ENCODE measurements at regions of chr17 and their contacts with region 1.

Region 1: GRCh38 chr17:29180034-29180787 is at the start of gene MYO18A:
- DNase-seq: peak; percentile 84
- H3K4me3 Mint-ChIP-seq: peak within 1 kb of the TSS; percentile 54
- H3K27ac Mint-ChIP-seq: no peak within 1 kb of the TSS
- H3K4me1 Mint-ChIP-seq: peaks cover 40% of the 10 kb centered on the region
- H3K27me3 Mint-ChIP-seq: peaks cover 7% of the 10 kb centered on the region
- total RNA-seq, gene MYO18A: 92.6 to 100 TPM

Region 2: GRCh38 chr17:28946239-28946638 is 234.0 kb before region 1 on chr17:
- CTCF ChIA-PET with region 1: no interaction called
- POLR2A ChIA-PET with region 1: no interaction called
- DNase-seq: no peak
- H3K4me3 Mint-ChIP-seq: no peak overlapping the region
- H3K27ac Mint-ChIP-seq: peak overlapping the region; percentile 50
- H3K4me1 Mint-ChIP-seq: peaks cover 59% of the 10 kb centered on the region
- H3K27me3 Mint-ChIP-seq: no peaks in the 10 kb centered on the region

Region 3: GRCh38 chr17:28967221-28968140 is 212.7 kb before region 1 on chr17:
- CTCF ChIA-PET with region 1: interaction called, 10 read pairs
- POLR2A ChIA-PET with region 1: no interaction called
- DNase-seq: no peak
- H3K4me3 Mint-ChIP-seq: no peak overlapping the region
- H3K27ac Mint-ChIP-seq: no peak overlapping the region
- H3K4me1 Mint-ChIP-seq: no peaks in the 10 kb centered on the region
- H3K27me3 Mint-ChIP-seq: peaks cover 22% of the 10 kb centered on the region

Region 4: GRCh38 chr17:29078183-29079045 is 101.8 kb before region 1 on chr17:
- CTCF ChIA-PET with region 1: no interaction called
- POLR2A ChIA-PET with region 1: no interaction called
- DNase-seq: no peak
- H3K4me3 Mint-ChIP-seq: no peak overlapping the region
- H3K27ac Mint-ChIP-seq: no peak overlapping the region
- H3K4me1 Mint-ChIP-seq: no peaks in the 10 kb centered on the region
- H3K27me3 Mint-ChIP-seq: no peaks in the 10 kb centered on the region

Region 5: GRCh38 chr17:29140051-29140621 is 40.1 kb before region 1 on chr17:
- CTCF ChIA-PET with region 1: interaction called, 261 read pairs
- POLR2A ChIA-PET with region 1: interaction called, 38 read pairs
- DNase-seq: peak; percentile 92
- H3K4me3 Mint-ChIP-seq: peak overlapping the region; percentile 98
- H3K27ac Mint-ChIP-seq: peak overlapping the region; percentile 100
- H3K4me1 Mint-ChIP-seq: peaks cover 79% of the 10 kb centered on the region
- H3K27me3 Mint-ChIP-seq: no peaks in the 10 kb centered on the region

Region 6: DNA sequence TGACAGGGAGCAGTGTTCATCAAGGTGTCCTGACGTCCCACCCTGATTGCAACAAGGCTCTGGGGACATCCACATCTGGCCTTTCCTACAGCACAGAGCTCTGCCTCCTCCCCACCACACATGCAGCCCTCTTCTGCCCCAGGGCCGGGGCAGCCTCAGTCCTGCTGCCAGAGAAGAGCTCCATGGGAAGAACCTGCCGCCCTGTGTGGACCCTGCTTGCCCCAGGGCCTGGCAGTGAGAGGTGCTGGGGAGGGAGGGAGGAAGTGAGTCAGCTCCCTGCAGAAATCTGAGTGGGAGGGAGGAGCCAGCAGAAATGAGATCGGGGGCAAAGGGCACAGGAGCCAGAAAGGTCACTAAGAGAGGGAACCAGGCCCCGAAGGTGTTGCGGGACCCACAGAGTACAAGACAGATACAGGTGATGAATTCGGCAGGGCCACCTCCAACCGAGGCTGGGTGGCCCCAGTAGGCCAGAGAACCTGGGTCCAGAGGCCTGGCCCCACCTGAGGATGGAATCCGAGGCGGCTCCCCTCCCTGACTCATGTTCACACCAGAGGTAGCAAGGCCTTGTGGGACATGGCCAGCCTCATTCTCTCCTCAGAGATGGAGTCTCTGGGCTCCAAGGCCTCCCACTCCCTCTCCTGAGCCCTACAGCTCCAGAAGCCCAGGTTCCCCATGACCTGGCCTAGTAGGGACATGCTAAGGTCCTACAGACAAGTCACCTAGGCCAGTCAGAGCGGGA is 24.8 kb before region 1 on chr17:
- CTCF ChIA-PET with region 1: interaction called, 261 read pairs
- POLR2A ChIA-PET with region 1: interaction called, 31 read pairs
- DNase-seq: peak; percentile 77
- H3K4me3 Mint-ChIP-seq: peak overlapping the region; percentile 41
- H3K27ac Mint-ChIP-seq: peak overlapping the region; percentile 90
- H3K4me1 Mint-ChIP-seq: peaks cover 50% of the 10 kb centered on the region
- H3K27me3 Mint-ChIP-seq: no peaks in the 10 kb centered on the region

Region 7: DNA sequence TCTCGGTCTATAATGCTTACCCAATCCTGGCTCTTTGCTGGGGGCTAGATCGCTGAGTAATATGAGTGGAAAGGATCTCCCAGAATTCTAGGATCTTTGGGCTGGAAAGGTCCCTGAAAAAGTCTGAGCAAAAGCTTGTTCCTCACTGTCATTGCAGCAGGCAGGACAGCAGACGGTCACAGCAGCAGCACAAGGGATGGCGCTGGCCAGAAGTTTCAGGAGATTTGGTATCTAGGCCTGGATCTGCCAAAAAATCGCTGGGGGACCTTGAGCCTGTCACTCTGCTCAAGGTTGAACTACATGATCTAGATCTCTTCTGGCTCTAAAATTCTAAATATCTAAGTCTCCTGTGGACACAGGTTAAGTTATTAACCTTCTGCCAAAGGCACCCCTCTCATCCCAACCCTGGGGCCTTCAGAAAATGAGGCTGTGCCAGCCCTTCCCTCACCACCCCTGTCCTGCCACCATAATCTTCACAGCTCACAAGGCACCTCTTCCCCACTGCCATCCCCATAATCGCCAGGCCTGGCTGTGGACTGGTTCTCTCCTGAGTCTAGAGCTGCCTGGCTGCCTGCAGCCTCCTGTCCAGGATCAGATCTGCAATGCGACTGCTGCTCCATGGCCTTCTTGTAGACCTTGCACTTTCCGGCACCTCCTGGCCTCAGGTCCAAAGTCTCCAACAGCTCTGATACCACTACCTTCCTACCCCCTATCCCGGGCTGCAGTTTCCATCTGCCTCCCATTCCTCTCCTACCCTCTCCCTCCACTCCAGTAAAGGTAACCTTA is 10.2 kb before region 1 on chr17:
- CTCF ChIA-PET with region 1: interaction called, 20 read pairs
- POLR2A ChIA-PET with region 1: interaction called, 9 read pairs
- DNase-seq: no peak
- H3K4me3 Mint-ChIP-seq: no peak overlapping the region
- H3K27ac Mint-ChIP-seq: no peak overlapping the region
- H3K4me1 Mint-ChIP-seq: no peaks in the 10 kb centered on the region
- H3K27me3 Mint-ChIP-seq: no peaks in the 10 kb centered on the region

Region 8: GRCh38 chr17:29219378-29220047 is 39.3 kb after region 1 on chr17:
- CTCF ChIA-PET with region 1: interaction called, 15 read pairs
- POLR2A ChIA-PET with region 1: no interaction called
- DNase-seq: peak; percentile 72
- H3K4me3 Mint-ChIP-seq: no peak overlapping the region
- H3K27ac Mint-ChIP-seq: no peak overlapping the region
- H3K4me1 Mint-ChIP-seq: peaks cover 6% of the 10 kb centered on the region
- H3K27me3 Mint-ChIP-seq: peaks cover 4% of the 10 kb centered on the region

Region 9: DNA sequence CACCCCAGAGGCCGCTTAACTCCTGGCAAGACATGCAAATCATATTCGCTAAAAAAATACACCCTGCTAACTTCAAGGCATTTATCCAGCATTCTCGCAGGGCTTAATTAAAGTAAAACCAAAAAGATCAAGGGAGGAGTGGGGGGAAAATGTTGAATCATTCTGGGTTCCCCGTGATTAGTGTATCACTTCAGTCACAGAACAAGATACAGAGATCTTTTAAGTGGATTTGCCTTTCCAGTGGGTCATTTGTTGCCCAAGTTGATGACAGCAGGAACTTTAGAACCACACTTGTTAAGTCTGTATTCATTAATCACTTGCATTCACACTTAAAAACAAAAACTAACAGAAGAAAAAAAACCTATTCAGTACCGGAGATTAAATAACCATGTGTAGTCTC is 83.7 kb after region 1 on chr17:
- CTCF ChIA-PET with region 1: no interaction called
- POLR2A ChIA-PET with region 1: no interaction called
- DNase-seq: no peak
- H3K4me3 Mint-ChIP-seq: no peak overlapping the region
- H3K27ac Mint-ChIP-seq: no peak overlapping the region
- H3K4me1 Mint-ChIP-seq: peaks cover 23% of the 10 kb centered on the region
- H3K27me3 Mint-ChIP-seq: no peaks in the 10 kb centered on the region